ENCODE measurements at regions of chr21 and their contacts with region 1.

Region 1: DNA sequence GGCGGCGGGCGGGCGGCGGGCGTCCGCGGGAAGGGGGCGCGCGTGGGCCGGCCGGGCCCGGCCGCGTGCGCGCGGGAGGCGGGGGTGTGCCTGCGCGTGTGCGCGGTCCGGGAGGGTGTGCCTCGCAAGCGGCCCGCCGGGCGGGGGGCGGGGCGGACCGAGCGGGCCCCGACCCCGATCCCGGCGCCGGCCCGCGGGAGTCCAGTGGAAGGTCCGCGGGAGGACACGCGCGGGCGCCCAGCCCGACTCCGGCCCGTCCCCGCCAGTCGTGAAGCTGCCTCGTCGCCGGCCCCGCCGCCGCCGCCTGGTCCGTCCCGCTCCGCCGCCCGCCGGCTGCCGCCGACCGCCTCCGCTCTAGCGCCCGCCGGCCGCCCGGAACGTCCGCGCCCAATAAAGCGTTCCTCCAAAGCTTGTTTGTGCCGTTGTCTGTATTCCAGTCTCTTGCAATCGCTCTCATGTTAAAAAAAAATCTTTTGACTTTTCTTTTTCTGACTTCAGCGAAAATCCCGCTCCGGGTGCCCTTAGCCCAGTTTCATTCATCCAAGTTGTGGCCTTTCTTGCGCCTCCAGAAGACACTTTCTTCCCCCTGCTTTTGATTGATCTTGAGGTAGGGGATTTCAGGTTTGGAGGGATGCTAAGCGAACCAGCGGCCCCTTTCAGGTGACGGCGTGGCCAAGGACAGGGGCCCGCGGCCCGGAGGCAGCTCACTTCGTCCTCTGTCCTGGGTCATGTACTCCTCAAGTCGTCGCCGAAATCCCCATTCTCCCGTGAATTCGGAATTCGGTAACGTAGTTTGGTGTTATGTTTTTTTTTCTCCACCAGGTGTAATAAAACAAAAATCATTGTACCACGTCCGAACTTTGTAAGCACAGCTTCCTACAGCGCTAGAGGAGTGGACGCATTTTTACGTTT is 748 bp downstream of the MRPS6 start:
- DNase-seq: peak; percentile 87
- H3K4me3 Mint-ChIP-seq: peak overlapping the region; percentile 96
- H3K27ac Mint-ChIP-seq: peak overlapping the region; percentile 93
- H3K4me1 Mint-ChIP-seq: peaks cover 48% of the 10 kb centered on the region
- H3K27me3 Mint-ChIP-seq: no peaks in the 10 kb centered on the region

Region 2: GRCh38 chr21:33924079-33924765 is 149.9 kb before region 1 on chr21:
- intact Hi-C with region 1: loop called (anchors 2 kb)
- DNase-seq: peak; percentile 97
- H3K4me3 Mint-ChIP-seq: no peak overlapping the region
- H3K27ac Mint-ChIP-seq: no peak overlapping the region
- H3K4me1 Mint-ChIP-seq: peaks cover 13% of the 10 kb centered on the region
- H3K27me3 Mint-ChIP-seq: no peaks in the 10 kb centered on the region

Region 3: GRCh38 chr21:33947451-33948095 is 126.6 kb before region 1 on chr21:
- intact Hi-C with region 1: loop called (anchors 1 kb)
- DNase-seq: peak; percentile 95
- H3K4me3 Mint-ChIP-seq: peak overlapping the region; percentile 80
- H3K27ac Mint-ChIP-seq: peak overlapping the region; percentile 100
- H3K4me1 Mint-ChIP-seq: peaks cover 70% of the 10 kb centered on the region
- H3K27me3 Mint-ChIP-seq: peaks cover 3% of the 10 kb centered on the region

Region 4: GRCh38 chr21:34029743-34030528 is 44.2 kb before region 1 on chr21:
- intact Hi-C with region 1: loop called (anchors 5 kb)
- DNase-seq: peak; percentile 82
- H3K4me3 Mint-ChIP-seq: peak overlapping the region; percentile 3
- H3K27ac Mint-ChIP-seq: peak overlapping the region; percentile 54
- H3K4me1 Mint-ChIP-seq: peaks cover 23% of the 10 kb centered on the region
- H3K27me3 Mint-ChIP-seq: no peaks in the 10 kb centered on the region

Region 5: GRCh38 chr21:34190576-34191321 is 116.6 kb after region 1 on chr21:
- intact Hi-C with region 1: loop called (anchors 2 kb)
- DNase-seq: peak; percentile 58
- H3K4me3 Mint-ChIP-seq: peak overlapping the region; percentile 46
- H3K27ac Mint-ChIP-seq: peak overlapping the region; percentile 88
- H3K4me1 Mint-ChIP-seq: peaks cover 35% of the 10 kb centered on the region
- H3K27me3 Mint-ChIP-seq: no peaks in the 10 kb centered on the region

Region 6: GRCh38 chr21:34202553-34203372 is 128.6 kb after region 1 on chr21:
- intact Hi-C with region 1: loop called (anchors 2 kb)
- DNase-seq: no peak
- H3K4me3 Mint-ChIP-seq: peak overlapping the region; percentile 85
- H3K27ac Mint-ChIP-seq: peak overlapping the region; percentile 87
- H3K4me1 Mint-ChIP-seq: peaks cover 62% of the 10 kb centered on the region
- H3K27me3 Mint-ChIP-seq: no peaks in the 10 kb centered on the region

Region 7: DNA sequence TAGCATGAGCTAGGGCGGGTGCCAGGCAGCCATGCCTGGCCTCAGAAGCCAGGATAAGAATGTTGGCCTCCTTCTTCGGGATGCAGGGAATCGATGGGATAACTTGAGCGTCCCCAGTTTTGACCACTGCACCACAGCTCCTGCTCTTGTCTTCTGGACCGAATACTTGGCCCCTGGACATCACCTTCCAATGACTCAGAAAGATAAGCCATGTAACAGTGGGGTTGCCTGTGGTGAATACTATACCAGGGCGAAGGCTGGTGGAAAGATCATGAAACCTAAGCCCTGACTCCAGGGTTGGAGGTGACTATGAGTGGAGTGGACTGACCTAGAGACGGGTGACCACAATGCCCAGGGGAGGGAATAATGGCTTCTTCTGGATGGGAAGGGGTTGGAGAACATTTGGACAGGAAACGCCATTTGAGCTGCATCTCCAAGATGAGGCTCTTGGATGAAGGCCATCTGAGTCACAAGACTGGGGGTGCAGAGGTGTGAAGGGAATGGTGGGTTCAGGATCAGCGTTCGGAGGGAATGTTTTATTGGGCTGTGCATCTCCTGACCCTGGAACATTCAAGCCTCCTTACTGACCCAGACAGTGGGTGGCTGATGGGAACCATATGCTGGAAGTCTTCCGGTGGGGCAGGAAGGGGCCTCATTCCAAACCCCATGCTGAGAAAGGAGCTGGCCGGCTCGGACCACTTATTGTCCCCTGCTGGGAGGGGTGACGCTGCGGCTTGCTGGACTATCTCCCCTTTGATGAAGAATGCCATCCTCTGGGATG is 271.2 kb after region 1 on chr21:
- intact Hi-C with region 1: loop called (anchors 2 kb)
- DNase-seq: no peak
- H3K4me3 Mint-ChIP-seq: no peak overlapping the region
- H3K27ac Mint-ChIP-seq: no peak overlapping the region
- H3K4me1 Mint-ChIP-seq: peaks cover 8% of the 10 kb centered on the region
- H3K27me3 Mint-ChIP-seq: no peaks in the 10 kb centered on the region

Measured in activated CD4-positive, alpha-beta T cell treated with anti-CD3 and anti-CD28 coated beads, Interleukin-2, amount 10 ng/mL, durations not matched to agents 24 days and 14 days (primary cell).